ENCODE measurements at regions of chr6 and their contacts with region 1.

Region 1: GRCh38 chr6:21648475-21649130 is 55.1 kb downstream of the SOX4 start:
- DNase-seq: no peak
- ATAC-seq: no peak
- H3K4me3 Mint-ChIP-seq: no peak overlapping the region
- H3K27ac Mint-ChIP-seq: no peak overlapping the region
- H3K4me1 Mint-ChIP-seq: no peaks in the 10 kb centered on the region
- H3K27me3 Mint-ChIP-seq: peaks cover 2% of the 10 kb centered on the region

Region 2: DNA sequence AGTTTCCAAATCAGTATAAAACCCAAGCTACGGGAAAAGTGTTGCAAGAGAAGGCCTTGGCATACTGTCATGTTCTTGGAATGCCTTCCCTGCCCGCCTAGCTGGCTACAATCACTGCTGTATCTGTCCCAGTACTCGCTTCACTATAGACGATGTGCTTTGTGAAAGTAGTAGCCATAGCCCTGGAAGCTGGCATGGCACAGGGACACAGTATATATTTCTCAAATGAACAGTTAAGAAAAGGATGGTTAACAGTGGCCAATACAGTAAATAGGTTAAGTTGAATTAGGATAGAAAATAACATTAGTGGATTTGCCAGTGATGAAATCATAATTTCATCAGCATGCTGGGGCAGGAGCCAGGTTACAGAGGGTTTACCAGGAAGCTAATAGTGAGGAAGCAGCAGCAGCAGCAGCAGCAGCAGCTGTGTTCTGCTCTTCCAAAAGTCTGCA is 615.0 kb before region 1 on chr6:
- CTCF ChIA-PET with region 1: no interaction called
- POLR2A ChIA-PET with region 1: no interaction called
- intact Hi-C with region 1: no loop called
- DNase-seq: no peak
- ATAC-seq: no peak
- H3K4me3 Mint-ChIP-seq: no peak overlapping the region
- H3K27ac Mint-ChIP-seq: no peak overlapping the region
- H3K4me1 Mint-ChIP-seq: no peaks in the 10 kb centered on the region
- H3K27me3 Mint-ChIP-seq: no peaks in the 10 kb centered on the region

Region 3: GRCh38 chr6:21710908-21711627 is 62.5 kb after region 1 on chr6:
- CTCF ChIA-PET with region 1: no interaction called
- POLR2A ChIA-PET with region 1: no interaction called
- intact Hi-C with region 1: no loop called
- DNase-seq: no peak
- ATAC-seq: no peak
- H3K4me3 Mint-ChIP-seq: no peak overlapping the region
- H3K27ac Mint-ChIP-seq: no peak overlapping the region
- H3K4me1 Mint-ChIP-seq: no peaks in the 10 kb centered on the region
- H3K27me3 Mint-ChIP-seq: peaks cover 7% of the 10 kb centered on the region

Region 4: GRCh38 chr6:22544476-22544875 is 895.9 kb after region 1 on chr6:
- CTCF ChIA-PET with region 1: no interaction called
- POLR2A ChIA-PET with region 1: interaction called, 18 read pairs
- intact Hi-C with region 1: no loop called
- DNase-seq: no peak
- ATAC-seq: no peak
- H3K4me3 Mint-ChIP-seq: no peak overlapping the region
- H3K27ac Mint-ChIP-seq: no peak overlapping the region
- H3K4me1 Mint-ChIP-seq: no peaks in the 10 kb centered on the region
- H3K27me3 Mint-ChIP-seq: no peaks in the 10 kb centered on the region

Measured in activated CD4-positive, alpha-beta T cell treated with anti-CD3 and anti-CD28 coated beads for 36 hours (primary cell).